ENCODE measurements at regions of chr1 and their contacts with region 1.

Region 1: DNA sequence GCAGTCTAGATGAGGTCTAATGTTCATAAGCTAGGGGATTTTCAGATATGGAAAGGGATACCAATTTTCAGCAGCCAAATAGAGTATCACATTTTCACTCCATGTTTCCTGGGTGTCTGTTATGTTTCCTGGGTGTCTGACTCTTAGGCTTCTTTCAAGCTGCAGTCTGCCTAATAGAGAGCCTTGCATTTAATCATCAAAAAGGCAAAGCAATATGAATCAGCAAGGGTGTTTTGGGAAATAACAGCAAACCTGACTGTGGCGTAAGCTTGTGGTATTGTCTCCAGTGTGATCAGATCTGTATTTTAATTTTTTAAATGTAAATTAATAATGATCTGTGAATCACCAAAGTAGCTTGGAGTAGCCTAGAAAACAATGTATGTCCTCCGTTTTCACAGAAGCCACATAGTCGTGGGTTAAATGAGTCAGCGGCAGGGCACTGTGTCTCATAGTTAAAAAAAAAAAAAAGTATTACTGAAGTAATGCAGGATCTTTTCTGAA is 10.4 kb downstream of the LGALS8 start:
- DNase-seq: no peak
- ATAC-seq: no peak
- H3K4me3 ChIP-seq: no peak overlapping the region
- H3K27ac ChIP-seq: peak overlapping the region; percentile 64
- H3K4me1 ChIP-seq: peaks cover 47% of the 10 kb centered on the region
- H3K27me3 ChIP-seq: no peaks in the 10 kb centered on the region
- CTCF ChIP-seq: no peak

Region 2: DNA sequence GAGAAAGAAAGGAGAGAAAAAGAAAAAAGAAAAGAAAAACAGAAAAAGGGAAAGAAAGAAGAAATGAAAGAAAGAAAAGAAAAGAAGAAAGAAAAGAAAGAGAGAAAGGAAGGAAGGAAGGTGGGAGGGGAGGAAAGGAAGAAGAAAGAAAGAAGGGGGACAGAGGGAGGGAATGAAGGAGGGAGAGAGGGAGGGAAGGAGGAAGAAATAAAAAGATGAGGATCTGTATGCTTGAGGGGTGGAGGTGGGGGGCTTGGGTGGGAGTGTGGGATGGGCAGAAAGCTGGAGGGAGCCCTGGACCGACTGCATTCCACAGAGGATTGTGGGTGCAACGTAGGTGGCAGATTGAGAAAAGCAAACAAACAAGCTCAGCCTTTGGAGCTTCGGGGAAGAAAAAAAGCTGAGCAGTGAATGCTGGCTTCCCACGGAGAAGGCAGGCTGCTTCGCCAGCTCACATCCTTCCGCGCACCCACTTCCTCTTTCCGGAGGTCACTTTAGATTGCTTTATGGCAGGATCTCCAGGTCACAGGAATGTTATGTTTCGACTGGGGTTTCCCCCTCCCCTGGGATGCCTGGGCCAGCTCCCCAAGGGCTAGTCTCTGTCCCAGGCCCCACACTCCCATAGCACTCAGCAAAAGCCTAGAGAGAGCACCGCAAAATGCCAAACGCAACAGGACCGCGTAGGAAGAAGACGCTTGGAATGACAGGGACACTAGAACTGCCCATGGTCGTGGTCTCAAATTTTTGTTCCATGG is 31.1 kb before region 1 on chr1:
- CTCF ChIA-PET with region 1: no interaction called
- POLR2A ChIA-PET with region 1: interaction called, 29 read pairs
- in situ Hi-C with region 1: no loop called
- intact Hi-C with region 1: no loop called
- DNase-seq: peak; percentile 35
- ATAC-seq: peak; percentile 87
- H3K4me3 ChIP-seq: peak overlapping the region; percentile 3 to 46; a peak in 3 of 4 replicates
- H3K27ac ChIP-seq: peak overlapping the region; percentile 100
- H3K4me1 ChIP-seq: peaks cover 47% of the 10 kb centered on the region
- H3K27me3 ChIP-seq: no peaks in the 10 kb centered on the region
- CTCF ChIP-seq: no peak